Transverse colon (tissue), 4 donors: ENCODE measurements at regions of chr19 and their contacts with region 1.

Region 1: GRCh38 chr19:40785526-40785925 is 7.5 kb downstream of the RAB4B start:
- DNase-seq: no peak
- H3K4me3 ChIP-seq: no peak overlapping the region
- H3K27ac ChIP-seq: no peak overlapping the region
- H3K4me1 ChIP-seq: no peaks in the 10 kb centered on the region
- H3K27me3 ChIP-seq: no peaks in the 10 kb centered on the region
- CTCF ChIP-seq: no peak
- EP300 ChIP-seq: no peak
- POLR2A ChIP-seq: no peak

Region 2: GRCh38 chr19:39381910-39382611 is 1403.5 kb before region 1 on chr19:
- in situ Hi-C with region 1: no loop called
- intact Hi-C with region 1: loop called (anchors 5 kb)
- DNase-seq: no peak
- H3K4me3 ChIP-seq: no peak overlapping the region
- H3K27ac ChIP-seq: no peak overlapping the region
- H3K4me1 ChIP-seq: no peaks in the 10 kb centered on the region
- H3K27me3 ChIP-seq: no peaks in the 10 kb centered on the region
- CTCF ChIP-seq: no peak
- EP300 ChIP-seq: no peak
- POLR2A ChIP-seq: no peak